K562 (cell line): ENCODE measurements at regions of chr1 and their contacts with region 1.

Region 1: GRCh38 chr1:45205910-45206721 is at the start of gene ZSWIM5:
- DNase-seq: peak; percentile 57 to 73 (median 69)
- ATAC-seq: peak; percentile 89
- H3K4me3 ChIP-seq: peak within 1 kb of the TSS; percentile 49
- H3K27ac ChIP-seq: no peak within 1 kb of the TSS
- H3K4me1 ChIP-seq: peaks cover 4 to 12% of the 10 kb centered on the region in 2 experiments; a peak in 4 of 5 replicates
- H3K27me3 ChIP-seq: peaks cover 29 to 30% of the 10 kb centered on the region in 2 experiments
- CTCF ChIP-seq: no peak
- EP300 ChIP-seq: no peak
- POLR2A ChIP-seq: no peak
- RAD21 ChIP-seq: no peak
- polyA plus RNA-seq, gene ZSWIM5: not detected

Region 2: GRCh38 chr1:45291716-45292115 is 85.6 kb after region 1 on chr1:
- CTCF ChIA-PET with region 1: no interaction called
- POLR2A ChIA-PET with region 1: no interaction called
- in situ Hi-C with region 1: no loop called
- intact Hi-C with region 1: loop called (anchors 5 kb)
- DNase-seq: no peak
- ATAC-seq: no peak
- H3K4me3 ChIP-seq: no peak overlapping the region
- H3K27ac ChIP-seq: no peak overlapping the region
- H3K4me1 ChIP-seq: no peaks in the 10 kb centered on the region; a peak in 1 of 5 replicates
- H3K27me3 ChIP-seq: no peaks in the 10 kb centered on the region
- CTCF ChIP-seq: no peak
- EP300 ChIP-seq: no peak
- POLR2A ChIP-seq: no peak
- RAD21 ChIP-seq: no peak

Region 3: DNA sequence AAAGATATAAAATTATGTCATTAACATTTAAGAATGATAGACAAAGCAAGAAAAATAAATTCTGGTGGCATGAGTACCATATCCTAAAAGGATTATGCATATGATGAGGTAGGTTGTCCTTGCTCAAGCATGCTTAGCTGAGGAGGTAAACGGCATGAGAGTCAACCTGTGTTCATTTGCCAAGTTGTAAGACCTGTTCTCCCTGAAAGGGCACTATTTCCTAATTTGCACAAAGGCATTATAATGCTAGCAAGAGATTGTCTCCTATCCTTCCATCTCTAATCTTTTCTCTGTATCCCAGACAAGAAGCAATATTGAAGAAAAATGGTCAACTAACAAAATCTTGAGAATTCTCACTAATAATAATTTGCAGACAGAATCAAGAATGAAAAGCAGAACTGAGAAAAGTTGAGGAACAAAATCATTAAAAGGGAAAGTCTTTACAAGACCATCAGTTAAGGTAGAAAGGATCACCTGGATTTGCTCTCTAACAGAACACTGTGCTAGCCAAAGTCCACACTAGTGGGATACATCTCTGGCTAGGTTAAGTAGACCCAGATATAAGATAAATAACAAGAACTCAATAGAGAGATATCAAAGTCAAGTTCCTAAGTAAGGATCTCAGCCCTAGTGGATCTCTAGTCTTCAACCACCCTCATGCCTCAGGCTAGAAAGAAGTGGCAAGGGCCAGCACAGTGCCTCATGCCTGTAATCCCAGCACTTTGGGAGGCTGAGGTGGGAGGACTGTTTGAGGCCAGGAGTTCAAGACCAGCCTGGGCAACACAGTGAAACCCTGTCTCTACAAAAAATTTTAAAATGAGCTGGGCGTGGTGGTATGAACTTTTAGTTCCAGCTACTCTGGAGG is 524.6 kb after region 1 on chr1:
- CTCF ChIA-PET with region 1: no interaction called
- POLR2A ChIA-PET with region 1: no interaction called
- in situ Hi-C with region 1: no loop called
- intact Hi-C with region 1: no loop called
- DNase-seq: no peak
- ATAC-seq: peak; percentile 33
- H3K4me3 ChIP-seq: no peak overlapping the region
- H3K27ac ChIP-seq: no peak overlapping the region
- H3K4me1 ChIP-seq: peaks cover 7 to 10% of the 10 kb centered on the region in 2 experiments; a peak in 4 of 5 replicates
- H3K27me3 ChIP-seq: no peaks in the 10 kb centered on the region
- CTCF ChIP-seq: no peak
- EP300 ChIP-seq: no peak
- POLR2A ChIP-seq: no peak
- RAD21 ChIP-seq: no peak